ENCODE measurements at regions of chr15 and their contacts with region 1.

Region 1: GRCh38 chr15:82849556-82850512 is 40.4 kb downstream of the WHAMM start:
- DNase-seq: peak; percentile 44 to 46
- H3K4me3 ChIP-seq: no peak overlapping the region
- H3K27ac ChIP-seq: no peak overlapping the region
- H3K4me1 ChIP-seq: no peaks in the 10 kb centered on the region
- H3K27me3 ChIP-seq: no peaks in the 10 kb centered on the region
- CTCF ChIP-seq: peak; percentile 65

Region 2: GRCh38 chr15:82985688-82986441 is 136.0 kb after region 1 on chr15 and contains the start of gene RAMAC:
- CTCF ChIA-PET with region 1: no interaction called
- POLR2A ChIA-PET with region 1: no interaction called
- intact Hi-C with region 1: loop called (anchors 5 kb)
- DNase-seq: peak; percentile 85 to 88
- H3K4me3 ChIP-seq: peak within 1 kb of the TSS; percentile 84
- H3K27ac ChIP-seq: 0 out of 2 replicates have a peak within 1 kb of the TSS, but pooled peaks have one; percentile 22
- H3K4me1 ChIP-seq: peaks cover 13% of the 10 kb centered on the region
- H3K27me3 ChIP-seq: no peaks in the 10 kb centered on the region
- CTCF ChIP-seq: no peak
- total RNA-seq, gene RAMAC: 18.2 and 18.7 TPM in 2 replicates

Region 3: DNA sequence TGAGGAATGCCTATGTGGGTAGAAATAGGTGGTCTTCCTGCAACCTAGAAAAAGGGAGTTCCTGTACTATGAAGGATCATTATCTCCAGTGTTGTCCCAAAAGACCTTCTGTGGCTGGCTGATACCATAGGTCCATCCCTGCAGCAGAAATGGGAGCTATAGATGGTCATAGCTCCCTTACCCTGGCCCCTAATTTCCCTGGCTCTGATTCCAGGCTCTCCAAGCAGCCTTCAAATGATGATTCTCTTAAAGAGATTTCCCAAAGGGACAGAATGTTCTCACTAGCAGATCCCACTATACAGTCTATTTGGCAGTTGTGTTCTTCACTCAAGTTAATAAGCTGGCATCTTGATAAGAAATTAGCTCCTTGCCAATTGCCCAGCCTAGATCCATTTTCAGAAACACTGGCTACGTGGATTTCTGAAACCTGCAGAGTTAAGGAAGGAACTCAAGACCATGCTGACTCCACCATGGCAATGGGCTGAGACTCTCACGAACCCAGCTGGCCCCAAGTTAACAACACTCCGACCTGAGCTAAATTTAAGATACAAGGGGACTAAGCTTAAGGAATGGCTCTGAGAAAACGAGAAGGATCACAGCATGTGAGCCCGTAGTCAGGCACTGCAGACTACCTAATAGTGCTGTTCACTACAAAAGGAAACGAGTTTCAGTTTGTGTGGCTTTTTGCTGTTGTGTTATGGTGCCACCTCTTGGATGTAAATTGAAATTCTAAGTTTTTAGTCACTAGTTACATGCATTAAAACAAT is 150.3 kb after region 1 on chr15:
- CTCF ChIA-PET with region 1: no interaction called
- POLR2A ChIA-PET with region 1: no interaction called
- intact Hi-C with region 1: loop called (anchors 2 kb)
- DNase-seq: peak; percentile 14 to 50
- H3K4me3 ChIP-seq: peak overlapping the region; percentile 29; the same call in 1 of the 2 replicates
- H3K27ac ChIP-seq: no peak overlapping the region
- H3K4me1 ChIP-seq: no peaks in the 10 kb centered on the region
- H3K27me3 ChIP-seq: no peaks in the 10 kb centered on the region
- CTCF ChIP-seq: peak; percentile 69